Endothelial cell of umbilical vein (primary cell): ENCODE measurements at regions of chr12 and their contacts with region 1.

Region 1: GRCh38 chr12:51814311-51815088 is 34.0 kb downstream of the FIGNL2 start:
- DNase-seq: peak; percentile 72
- H3K4me3 ChIP-seq: peak overlapping the region; percentile 40 to 46 (median 46)
- H3K27ac ChIP-seq: peak overlapping the region; percentile 74
- H3K4me1 ChIP-seq: peaks cover 9% of the 10 kb centered on the region
- H3K27me3 ChIP-seq: no peaks in the 10 kb centered on the region
- CTCF ChIP-seq: peak; percentile 73 to 80
- POLR2A ChIP-seq: peak; percentile 55

Region 2: GRCh38 chr12:51424662-51425438 is 389.6 kb before region 1 on chr12 and contains the start of gene SLC4A8:
- CTCF ChIA-PET with region 1: interaction called, 9 read pairs
- POLR2A ChIA-PET with region 1: no interaction called
- dilution Hi-C with region 1: no loop called
- intact Hi-C with region 1: loop called (anchors 1 kb)
- DNase-seq: peak; percentile 78
- H3K4me3 ChIP-seq: peak within 1 kb of the TSS; percentile 21 to 59 (median 33)
- H3K27ac ChIP-seq: no peak within 1 kb of the TSS
- H3K4me1 ChIP-seq: peaks cover 7% of the 10 kb centered on the region
- H3K27me3 ChIP-seq: no peaks in the 10 kb centered on the region
- CTCF ChIP-seq: peak; percentile 86 to 91
- POLR2A ChIP-seq: peak; percentile 37
- total RNA-seq, gene SLC4A8: 7.1 and 9.7 TPM in 2 replicates

Region 3: DNA sequence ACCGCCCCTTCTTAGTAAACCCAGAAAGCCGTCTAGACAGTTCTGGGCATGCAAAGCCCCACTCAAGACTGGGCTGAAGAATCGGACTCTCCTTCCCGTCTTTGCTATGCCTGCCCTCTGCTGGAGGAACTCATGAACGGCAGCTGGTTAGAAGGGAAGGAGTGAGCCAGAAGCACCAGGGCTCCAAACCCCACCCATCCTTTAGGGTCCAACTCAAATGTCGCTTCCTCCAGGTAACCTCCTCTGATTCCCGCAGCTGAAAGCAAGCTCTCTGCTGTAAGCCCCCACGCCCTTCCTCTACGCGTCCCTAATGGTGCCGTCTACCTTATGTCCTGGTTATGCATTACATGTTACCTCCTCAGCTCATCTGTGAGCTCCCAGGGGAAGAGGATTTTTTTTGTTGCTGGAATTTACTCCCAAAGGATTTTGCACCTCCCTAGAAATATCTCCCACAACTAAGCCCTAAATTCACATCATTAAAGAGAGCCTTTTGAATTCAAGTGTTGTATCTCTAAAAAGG is 282.5 kb before region 1 on chr12:
- CTCF ChIA-PET with region 1: interaction called, 21 read pairs
- POLR2A ChIA-PET with region 1: no interaction called
- dilution Hi-C with region 1: no loop called
- intact Hi-C with region 1: loop called (anchors 1 kb)
- DNase-seq: peak; percentile 73
- H3K4me3 ChIP-seq: no peak overlapping the region
- H3K27ac ChIP-seq: no peak overlapping the region
- H3K4me1 ChIP-seq: no peaks in the 10 kb centered on the region
- H3K27me3 ChIP-seq: peaks cover 2 to 3% of the 10 kb centered on the region in 2 experiments
- CTCF ChIP-seq: peak; percentile 82 to 90
- POLR2A ChIP-seq: no peak

Region 4: GRCh38 chr12:51631591-51631990 is 182.9 kb before region 1 on chr12:
- CTCF ChIA-PET with region 1: no interaction called
- POLR2A ChIA-PET with region 1: no interaction called
- dilution Hi-C with region 1: no loop called
- intact Hi-C with region 1: no loop called
- DNase-seq: peak; percentile 41
- H3K4me3 ChIP-seq: no peak overlapping the region
- H3K27ac ChIP-seq: no peak overlapping the region
- H3K4me1 ChIP-seq: peaks cover 3% of the 10 kb centered on the region
- H3K27me3 ChIP-seq: no peaks in the 10 kb centered on the region
- CTCF ChIP-seq: no peak
- POLR2A ChIP-seq: no peak

Region 5: DNA sequence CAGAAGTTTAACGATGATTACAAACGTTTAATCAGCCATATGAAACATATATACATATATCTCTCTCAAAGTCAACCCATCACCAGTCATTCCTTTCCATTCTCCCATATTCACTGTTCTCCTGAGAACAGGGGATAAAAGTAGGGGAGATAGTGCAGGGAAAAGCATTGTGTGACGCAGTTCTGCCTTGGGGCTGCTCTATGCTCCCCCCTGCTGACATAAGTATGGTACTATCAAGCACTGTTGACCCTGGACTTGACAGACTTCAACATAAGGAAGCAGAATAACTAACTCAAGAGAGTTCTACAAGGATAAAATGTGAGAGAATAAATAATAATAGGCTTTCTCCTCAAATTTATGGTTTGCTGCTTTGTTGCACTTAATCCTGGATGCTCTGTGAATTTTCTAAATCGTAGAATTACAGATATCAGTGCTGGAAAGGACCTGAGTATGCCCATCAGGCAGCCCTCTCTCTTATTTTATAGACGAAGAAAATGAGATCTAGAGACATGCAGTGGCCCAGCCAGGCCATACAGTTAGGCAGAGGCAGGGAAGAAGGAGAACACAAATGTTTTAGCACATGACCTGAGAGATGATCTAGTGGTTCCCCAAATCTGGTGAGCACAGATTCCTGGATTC is 136.3 kb before region 1 on chr12:
- CTCF ChIA-PET with region 1: interaction called, 4 read pairs
- POLR2A ChIA-PET with region 1: no interaction called
- dilution Hi-C with region 1: no loop called
- intact Hi-C with region 1: loop called (anchors 1 kb)
- DNase-seq: peak; percentile 73
- H3K4me3 ChIP-seq: no peak overlapping the region
- H3K27ac ChIP-seq: no peak overlapping the region
- H3K4me1 ChIP-seq: peaks cover 3% of the 10 kb centered on the region
- H3K27me3 ChIP-seq: no peaks in the 10 kb centered on the region
- CTCF ChIP-seq: peak; percentile 76 to 83
- POLR2A ChIP-seq: no peak

Region 6: DNA sequence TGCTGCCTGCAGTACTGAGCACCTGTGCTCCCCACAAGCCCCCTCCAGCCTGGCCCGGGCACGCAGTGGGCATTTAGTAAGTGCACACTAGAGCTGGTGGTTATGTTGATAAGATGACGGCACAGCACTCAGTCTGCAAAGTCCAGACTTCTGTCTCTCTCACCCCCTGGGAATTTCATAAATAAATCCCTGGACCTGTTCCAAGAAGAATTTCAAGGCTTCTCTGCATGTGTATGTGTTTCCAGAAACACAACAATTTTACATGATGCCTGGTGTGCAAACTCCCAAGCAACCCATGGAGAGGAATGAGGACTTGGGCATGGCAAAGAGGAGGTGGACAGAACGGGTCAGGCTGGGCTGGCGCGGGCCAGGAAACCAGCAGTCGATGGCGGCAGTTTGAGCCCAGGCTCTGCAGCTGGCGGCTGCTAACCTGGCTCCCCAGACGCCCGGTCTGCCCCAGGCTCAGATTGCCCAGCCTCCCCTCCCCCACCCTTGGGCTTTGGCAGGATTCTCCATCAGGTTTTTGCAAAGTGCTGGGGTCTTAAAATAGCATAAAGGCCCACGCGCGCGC is 126.6 kb after region 1 on chr12:
- CTCF ChIA-PET with region 1: no interaction called
- POLR2A ChIA-PET with region 1: no interaction called
- dilution Hi-C with region 1: no loop called
- intact Hi-C with region 1: no loop called
- DNase-seq: no peak
- H3K4me3 ChIP-seq: no peak overlapping the region
- H3K27ac ChIP-seq: no peak overlapping the region
- H3K4me1 ChIP-seq: no peaks in the 10 kb centered on the region
- H3K27me3 ChIP-seq: no peaks in the 10 kb centered on the region
- CTCF ChIP-seq: no peak
- POLR2A ChIP-seq: no peak

Region 7: GRCh38 chr12:52139552-52140062 is 325.1 kb after region 1 on chr12:
- CTCF ChIA-PET with region 1: no interaction called
- POLR2A ChIA-PET with region 1: no interaction called
- dilution Hi-C with region 1: no loop called
- intact Hi-C with region 1: no loop called
- DNase-seq: no peak
- H3K4me3 ChIP-seq: no peak overlapping the region
- H3K27ac ChIP-seq: no peak overlapping the region
- H3K4me1 ChIP-seq: no peaks in the 10 kb centered on the region
- H3K27me3 ChIP-seq: peaks cover 4% of the 10 kb centered on the region in 2 experiments
- CTCF ChIP-seq: peak; percentile 69 to 71
- POLR2A ChIP-seq: no peak